Right ventricle myocardium inferior (tissue), 1 donor: ENCODE measurements at regions of chr1 and their contacts with region 1.

Region 1: DNA sequence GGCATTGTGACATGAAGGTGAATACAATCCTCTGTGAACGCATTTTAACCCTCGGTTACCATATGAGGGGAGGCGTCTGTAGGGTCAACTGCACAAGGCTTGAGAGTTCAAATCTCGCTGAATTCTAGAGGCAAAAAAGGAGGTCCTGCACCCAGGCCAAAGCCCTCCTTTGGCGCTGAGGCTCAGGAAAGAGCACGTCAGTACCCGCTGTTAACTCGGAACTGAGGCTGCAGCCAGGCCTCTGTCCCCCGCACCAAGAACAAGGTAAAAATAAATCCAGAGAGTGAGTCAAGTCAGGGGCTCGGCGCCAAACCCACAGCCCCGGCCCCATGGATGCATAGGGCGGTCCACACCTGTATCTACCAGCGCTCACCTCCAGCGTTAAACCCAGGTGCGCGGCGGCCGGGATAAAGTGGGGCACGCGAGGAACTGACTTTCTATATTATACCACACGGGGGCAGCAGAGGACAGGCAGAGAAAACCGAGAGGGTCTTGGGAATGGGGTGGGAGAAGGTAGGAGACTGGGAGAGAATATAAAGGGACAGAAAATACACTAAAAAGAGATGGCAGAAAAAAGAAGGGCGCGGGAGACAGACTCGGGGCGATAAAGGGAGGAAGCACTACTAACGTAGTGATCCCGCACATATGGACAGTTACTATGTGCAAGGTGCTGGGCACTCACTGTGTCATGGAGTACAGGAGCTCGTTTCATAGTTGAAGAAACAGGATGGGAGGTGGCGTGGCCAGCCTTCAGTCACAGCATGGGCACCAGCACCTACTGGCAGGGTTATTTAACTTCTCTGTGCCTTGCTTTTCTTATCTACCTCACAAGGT is 54.8 kb downstream of the DMRTA2 start:
- DNase-seq: no peak
- ATAC-seq: no peak

Region 2: GRCh38 chr1:50704126-50704525 is 335.7 kb after region 1 on chr1:
- intact Hi-C with region 1: loop called (anchors 10 kb)
- DNase-seq: no peak
- ATAC-seq: no peak

Region 3: GRCh38 chr1:50735443-50735842 is 367.0 kb after region 1 on chr1:
- intact Hi-C with region 1: loop called (anchors 10 kb)
- DNase-seq: no peak
- ATAC-seq: no peak

Region 4: DNA sequence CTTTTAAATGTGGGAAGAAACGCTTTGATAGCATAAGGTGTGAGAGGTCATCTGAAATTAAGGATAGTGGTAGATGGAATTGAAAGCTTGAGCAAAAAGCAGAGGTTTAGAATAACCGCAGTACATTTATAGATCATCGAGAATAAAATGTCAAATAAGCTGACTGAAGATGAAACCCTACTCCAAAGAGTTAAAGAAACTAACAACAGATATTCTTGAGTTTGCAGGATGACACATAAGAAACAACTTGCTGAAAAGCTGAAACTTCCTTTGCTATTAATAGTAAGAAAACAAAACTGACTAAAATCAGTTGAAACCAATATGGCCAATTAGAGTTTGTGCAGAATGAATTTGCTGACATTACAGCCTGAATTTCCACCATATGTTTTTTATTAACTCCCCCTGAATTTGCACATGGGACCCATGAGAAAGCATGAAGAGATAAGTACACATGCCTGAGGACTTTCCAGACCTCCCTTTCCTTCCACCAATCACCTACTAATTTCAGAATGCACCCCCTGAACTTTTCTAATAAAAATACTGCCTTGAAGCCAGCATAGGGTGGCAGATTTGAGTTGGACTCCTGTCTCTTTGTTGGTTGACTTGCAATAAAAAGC is 732.0 kb after region 1 on chr1:
- intact Hi-C with region 1: no loop called
- DNase-seq: no peak
- ATAC-seq: no peak

Region 5: DNA sequence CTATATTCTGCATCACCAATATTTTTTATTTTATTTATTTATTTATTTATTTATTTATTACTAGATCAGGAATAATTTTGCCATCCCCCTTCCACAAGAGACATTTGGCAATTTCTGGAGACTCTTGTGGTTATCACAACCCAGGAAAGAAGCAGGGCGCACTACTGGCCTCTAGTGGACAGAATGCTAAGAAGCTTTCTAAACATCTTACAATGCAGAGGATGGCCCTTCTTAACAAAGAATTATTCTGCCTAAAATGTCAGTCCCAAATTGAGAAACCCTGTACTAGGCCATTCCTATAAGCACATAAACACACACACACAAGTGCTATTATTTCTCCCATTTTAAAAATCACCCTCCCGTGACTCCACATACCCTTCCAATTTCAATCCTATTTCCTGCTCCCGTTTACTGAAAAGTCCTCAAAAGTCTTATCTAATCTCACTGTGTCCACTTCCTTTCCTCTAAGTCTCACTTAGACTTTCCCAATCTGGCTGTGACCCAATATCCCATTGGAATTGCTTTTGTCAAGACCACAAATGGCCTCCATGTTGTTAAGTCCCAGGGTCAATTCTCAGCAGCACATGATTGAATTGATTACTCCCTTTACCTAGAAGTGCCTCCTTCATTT is 823.9 kb after region 1 on chr1:
- intact Hi-C with region 1: loop called (anchors 5 kb)
- DNase-seq: peak; percentile 79
- ATAC-seq: peak; percentile 59